ENCODE measurements at regions of chr14 and their contacts with region 1.

Region 1: GRCh38 chr14:57692671-57693070 is 173.2 kb downstream of the SLC35F4 start:
- DNase-seq: peak in 1 of 2 experiments; percentile 28
- H3K4me3 ChIP-seq: no peak overlapping the region
- H3K4me3 Mint-ChIP-seq: no peak overlapping the region
- H3K27ac Mint-ChIP-seq: no peak overlapping the region
- H3K4me1 ChIP-seq: no peaks in the 10 kb centered on the region
- H3K4me1 Mint-ChIP-seq: no peaks in the 10 kb centered on the region
- H3K27me3 ChIP-seq: no peaks in the 10 kb centered on the region
- H3K27me3 Mint-ChIP-seq: peaks cover 5% of the 10 kb centered on the region
- CTCF ChIP-seq: peak in 1 of 2 experiments; percentile 41

Region 2: DNA sequence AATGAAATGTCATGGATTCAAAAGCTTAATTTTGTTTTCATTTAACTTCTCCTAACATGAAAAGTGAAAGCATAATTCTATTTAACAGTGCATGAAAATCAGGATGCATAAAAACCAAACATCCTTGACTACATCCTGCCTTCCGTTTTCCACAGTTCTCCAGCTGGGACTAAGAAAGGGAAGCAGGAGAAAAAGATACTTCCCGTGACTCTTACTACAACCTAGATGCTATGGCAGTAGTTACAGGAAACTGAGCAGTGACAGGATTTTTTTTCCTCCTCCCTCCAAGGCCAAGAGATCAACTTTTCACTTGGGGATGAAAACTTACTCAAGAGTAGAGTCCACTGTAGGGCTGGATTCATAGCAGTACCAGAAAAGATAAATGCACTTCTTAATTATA is 426.6 kb before region 1 on chr14:
- CTCF ChIA-PET with region 1: no interaction called
- POLR2A ChIA-PET with region 1: no interaction called
- intact Hi-C with region 1: no loop called
- DNase-seq: no peak
- H3K4me3 ChIP-seq: no peak overlapping the region
- H3K4me3 Mint-ChIP-seq: no peak overlapping the region
- H3K27ac Mint-ChIP-seq: no peak overlapping the region
- H3K4me1 ChIP-seq: peaks cover 27% of the 10 kb centered on the region
- H3K4me1 Mint-ChIP-seq: peaks cover 26% of the 10 kb centered on the region
- H3K27me3 ChIP-seq: no peaks in the 10 kb centered on the region
- H3K27me3 Mint-ChIP-seq: no peaks in the 10 kb centered on the region
- CTCF ChIP-seq: no peak

Region 3: GRCh38 chr14:57871459-57872080 is 178.9 kb after region 1 on chr14:
- CTCF ChIA-PET with region 1: interaction called, 3 read pairs
- POLR2A ChIA-PET with region 1: no interaction called
- intact Hi-C with region 1: loop called (anchors 1 kb)
- DNase-seq: peak in 1 of 2 experiments; percentile 37
- H3K4me3 ChIP-seq: no peak overlapping the region
- H3K4me3 Mint-ChIP-seq: no peak overlapping the region
- H3K27ac Mint-ChIP-seq: no peak overlapping the region
- H3K4me1 ChIP-seq: no peaks in the 10 kb centered on the region
- H3K4me1 Mint-ChIP-seq: peaks cover 7% of the 10 kb centered on the region
- H3K27me3 ChIP-seq: no peaks in the 10 kb centered on the region
- H3K27me3 Mint-ChIP-seq: peaks cover 11% of the 10 kb centered on the region
- CTCF ChIP-seq: peak; percentile 44 to 62